Heart left ventricle (tissue), 16 donors: ENCODE measurements at regions of chr3 and their contacts with region 1.

Region 1: DNA sequence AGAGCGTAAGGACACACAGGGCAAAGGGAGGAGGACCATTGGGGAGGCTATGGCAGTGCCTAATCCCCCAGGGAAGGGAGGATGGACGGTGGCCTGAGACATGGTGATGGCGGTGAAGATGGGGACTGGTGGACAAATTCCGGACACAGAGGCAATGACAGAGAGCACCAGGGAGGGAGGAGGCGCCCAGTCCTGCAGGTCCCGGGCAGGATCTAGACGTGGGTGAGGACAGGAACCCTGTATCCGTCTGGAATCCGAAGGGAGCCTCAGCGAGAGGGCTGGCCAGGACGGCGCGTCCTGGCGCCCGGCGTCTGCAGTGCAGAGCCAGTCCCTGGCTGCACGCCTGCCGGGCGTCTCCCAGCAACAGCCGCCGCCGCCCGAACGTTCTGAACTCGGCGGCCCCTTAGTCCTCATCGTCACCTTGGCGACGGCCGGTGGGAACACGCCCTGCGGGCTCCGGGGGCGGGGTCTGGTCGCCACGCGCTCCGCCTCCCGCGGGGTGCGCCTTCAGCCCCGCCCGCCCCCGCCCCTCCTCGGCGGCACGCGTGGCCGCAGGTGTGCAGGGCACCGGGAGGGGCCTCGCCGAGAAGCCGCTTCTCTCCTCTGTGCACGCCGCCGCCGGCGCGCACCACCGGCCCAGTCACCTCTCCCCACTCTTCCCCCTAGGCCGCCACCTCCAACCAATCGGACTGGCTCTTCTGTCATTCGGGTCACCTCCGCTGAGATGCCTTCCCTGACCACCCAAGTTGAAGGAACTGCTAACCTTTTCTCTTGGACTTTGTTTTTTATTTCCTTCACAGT is 11.6 kb downstream of the XIRP1 start:
- DNase-seq: peak; percentile 93 to 96 (median 95)
- ATAC-seq: peak; percentile 80 to 89 (median 84)
- H3K4me3 ChIP-seq: peak overlapping the region in 11 of 12 donors; percentile 15 to 53 (median 47)
- H3K27ac ChIP-seq: peak overlapping the region; percentile 69 to 99 (median 94)
- H3K4me1 ChIP-seq: peaks cover 3 to 84% (median 44%) of the 10 kb centered on the region in 12 donors
- H3K27me3 ChIP-seq: no peaks in the 10 kb centered on the region
- CTCF ChIP-seq: peak in 9 of 12 donors; percentile 9 to 53 (median 32)
- POLR2A ChIP-seq: peak in 1 of 2 donors; percentile 50

Region 2: GRCh38 chr3:39135170-39135805 is 45.5 kb before region 1 on chr3:
- intact Hi-C with region 1: loop called in 7 of 10 experiments (anchors 1 to 10 kb)
- DNase-seq: peak in 4 of 5 donors; percentile 32 to 79 (median 74)
- ATAC-seq: peak; percentile 49 to 65 (median 58)
- H3K4me3 ChIP-seq: no peak overlapping the region
- H3K27ac ChIP-seq: peak overlapping the region in 6 of 12 donors; percentile 27 to 69 (median 48)
- H3K4me1 ChIP-seq: peaks cover 11 to 56% (median 23%) of the 10 kb centered on the region in 12 donors
- H3K27me3 ChIP-seq: no peaks in the 10 kb centered on the region
- CTCF ChIP-seq: no peak
- POLR2A ChIP-seq: peak in 1 of 2 donors; percentile 27

Region 3: DNA sequence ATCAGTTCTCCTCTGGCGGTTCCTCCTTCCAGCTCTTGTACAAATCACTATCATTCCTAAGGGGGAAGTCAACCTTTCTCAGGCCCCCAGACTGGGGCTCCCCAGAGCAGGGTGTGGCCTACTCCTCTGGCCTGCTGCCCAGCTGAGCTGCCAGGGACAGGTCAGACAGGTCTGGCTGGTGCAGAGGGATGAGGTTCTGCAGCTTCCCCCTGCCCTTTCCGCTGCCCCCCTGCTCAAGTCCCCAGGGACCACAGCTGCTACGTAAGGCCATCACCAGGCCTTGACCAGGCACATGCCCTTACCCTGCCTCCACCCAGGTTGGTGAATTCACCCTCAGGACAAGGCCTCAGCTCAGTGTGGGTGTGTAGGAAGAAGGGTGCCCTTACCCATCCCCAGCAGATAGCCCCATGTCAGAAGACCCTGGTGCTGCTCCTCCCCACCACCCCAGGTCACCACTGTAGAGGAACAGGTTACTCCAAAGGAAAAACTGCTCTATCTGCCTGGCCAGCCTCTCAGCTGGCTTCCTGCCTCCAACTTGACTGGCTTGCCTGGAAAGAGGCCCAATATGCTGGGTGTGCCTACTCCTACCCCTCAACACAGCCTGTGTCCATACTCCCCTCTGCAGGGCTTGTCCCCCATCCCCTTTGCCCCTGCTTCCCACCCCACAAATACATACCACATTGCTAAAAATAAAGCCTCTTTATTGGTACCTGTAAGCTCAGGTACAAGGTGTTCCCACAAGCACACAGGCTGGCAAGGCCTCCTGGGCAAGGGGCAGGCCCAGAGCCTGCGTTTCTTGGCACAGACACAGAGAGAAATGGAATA is 39.4 kb before region 1 on chr3:
- intact Hi-C with region 1: loop called in 6 of 10 experiments (anchors 5 to 10 kb)
- DNase-seq: peak in 4 of 5 donors; percentile 55 to 78 (median 74)
- ATAC-seq: peak; percentile 45 to 59 (median 52)
- H3K4me3 ChIP-seq: no peak overlapping the region
- H3K27ac ChIP-seq: peak overlapping the region; percentile 4 to 60 (median 38)
- H3K4me1 ChIP-seq: peaks cover 18 to 75% (median 45%) of the 10 kb centered on the region in 12 donors
- H3K27me3 ChIP-seq: no peaks in the 10 kb centered on the region
- CTCF ChIP-seq: no peak
- POLR2A ChIP-seq: no peak

Region 4: DNA sequence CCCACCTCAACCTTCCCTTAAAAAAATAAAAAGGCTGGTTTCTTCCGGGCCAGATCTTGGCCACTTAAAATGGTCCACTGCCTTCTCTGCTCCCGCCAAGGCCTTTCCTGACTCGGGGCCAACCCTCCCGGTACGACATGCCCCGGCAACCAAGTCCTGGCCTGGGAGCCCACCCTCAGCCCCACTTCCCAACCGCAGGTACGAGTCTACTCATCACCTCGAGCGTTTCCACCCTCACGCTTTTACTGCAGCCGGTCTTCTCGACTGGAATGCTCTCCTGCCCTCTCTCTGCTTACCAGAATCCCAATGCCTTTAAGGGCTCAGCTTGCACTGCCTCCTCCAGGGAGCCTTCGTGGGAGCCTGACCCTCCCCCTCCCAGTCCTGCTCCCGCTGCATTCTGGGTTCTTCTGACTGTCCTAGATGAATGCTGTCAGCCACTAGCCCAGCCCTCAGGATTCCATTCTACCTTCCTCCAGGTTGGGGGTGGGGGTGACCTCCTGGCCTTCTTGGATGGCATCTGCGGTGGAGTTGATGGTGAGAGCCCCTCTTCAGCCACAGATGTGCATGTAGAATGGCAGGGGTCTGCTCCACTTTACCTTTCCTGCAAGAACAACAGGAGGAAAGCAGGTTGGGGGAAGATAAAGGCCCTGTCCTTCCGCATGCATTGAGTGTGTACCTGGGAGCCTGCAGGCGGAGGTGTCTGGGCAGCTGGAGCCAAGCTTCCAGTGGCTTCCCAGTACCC is 26.3 kb before region 1 on chr3:
- intact Hi-C with region 1: loop called in 1 of 10 experiments (anchors 2 kb)
- DNase-seq: peak in 1 of 5 donors; percentile 34
- ATAC-seq: no peak
- H3K4me3 ChIP-seq: peak overlapping the region in 5 of 12 donors; percentile 83 to 99 (median 96)
- H3K27ac ChIP-seq: peak overlapping the region; percentile 53 to 100 (median 99)
- H3K4me1 ChIP-seq: peaks cover 15 to 42% (median 32%) of the 10 kb centered on the region in 12 donors
- H3K27me3 ChIP-seq: no peaks in the 10 kb centered on the region
- CTCF ChIP-seq: no peak
- POLR2A ChIP-seq: no peak

Region 5: DNA sequence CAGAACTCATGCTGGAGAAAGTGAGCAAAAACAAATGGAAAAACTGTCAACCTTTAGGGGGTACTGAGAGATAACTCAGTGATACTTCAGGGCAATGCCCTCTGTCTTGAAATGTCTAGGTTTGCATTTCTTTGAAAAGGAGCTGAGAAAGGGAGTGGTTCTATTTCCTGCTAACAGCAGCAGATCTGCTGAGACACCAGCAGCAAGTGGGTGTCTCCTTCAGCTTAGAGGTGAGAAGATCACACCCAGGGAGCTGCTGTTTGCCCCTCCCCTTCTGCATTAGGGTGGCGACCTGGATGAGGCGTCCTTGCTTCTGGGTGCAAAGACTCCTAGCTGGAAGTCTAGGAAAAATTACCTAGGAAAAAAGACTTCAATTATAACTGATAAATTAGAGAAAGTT is 54.0 kb after region 1 on chr3:
- intact Hi-C with region 1: no loop called
- DNase-seq: no peak
- ATAC-seq: no peak
- H3K4me3 ChIP-seq: no peak overlapping the region
- H3K27ac ChIP-seq: peak overlapping the region in 1 of 12 donors; percentile 12
- H3K4me1 ChIP-seq: peaks cover 0 to 34% (median 3%) of the 10 kb centered on the region in 12 donors
- H3K27me3 ChIP-seq: peaks cover 0 to 2% (median 0%) of the 10 kb centered on the region in 9 donors
- CTCF ChIP-seq: no peak
- POLR2A ChIP-seq: no peak

Region 6: DNA sequence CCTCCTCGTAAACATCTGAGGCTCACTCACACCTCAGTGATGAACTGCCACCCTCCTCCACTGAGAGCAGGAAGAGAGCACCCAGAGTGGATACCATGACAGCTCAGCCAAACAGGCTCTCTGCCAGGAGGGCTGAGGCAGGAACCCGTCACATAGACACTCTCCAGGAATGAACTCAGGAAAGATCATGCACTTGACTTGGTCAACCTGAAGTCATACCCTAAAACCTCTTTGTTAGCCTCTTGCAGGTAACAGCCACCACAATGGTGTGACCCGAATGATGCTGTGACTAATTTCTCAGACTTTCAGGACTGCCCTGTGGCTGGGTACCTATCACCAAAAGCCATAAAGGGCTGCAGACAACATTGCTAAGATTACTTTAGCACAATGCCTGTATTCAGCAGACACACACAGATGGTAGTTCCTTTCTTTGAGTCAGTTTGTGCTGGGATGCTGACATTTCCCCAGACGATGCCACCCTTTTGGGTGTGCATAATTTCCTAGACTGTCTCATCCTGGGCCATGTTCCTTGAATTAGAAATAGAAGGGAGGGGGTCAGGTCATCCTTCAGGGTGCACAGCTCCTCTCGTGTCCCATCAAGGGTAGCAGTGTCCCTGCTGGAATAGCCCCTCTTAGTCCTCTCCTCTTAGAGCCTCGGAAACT is 68.8 kb after region 1 on chr3:
- intact Hi-C with region 1: no loop called
- DNase-seq: peak in 1 of 5 donors; percentile 49
- ATAC-seq: peak in 3 of 4 donors; percentile 49 to 79 (median 76)
- H3K4me3 ChIP-seq: no peak overlapping the region
- H3K27ac ChIP-seq: peak overlapping the region in 4 of 12 donors; percentile 22 to 82 (median 46)
- H3K4me1 ChIP-seq: peaks cover 0 to 37% (median 9%) of the 10 kb centered on the region in 12 donors
- H3K27me3 ChIP-seq: no peaks in the 10 kb centered on the region
- CTCF ChIP-seq: no peak
- POLR2A ChIP-seq: no peak

Region 7: DNA sequence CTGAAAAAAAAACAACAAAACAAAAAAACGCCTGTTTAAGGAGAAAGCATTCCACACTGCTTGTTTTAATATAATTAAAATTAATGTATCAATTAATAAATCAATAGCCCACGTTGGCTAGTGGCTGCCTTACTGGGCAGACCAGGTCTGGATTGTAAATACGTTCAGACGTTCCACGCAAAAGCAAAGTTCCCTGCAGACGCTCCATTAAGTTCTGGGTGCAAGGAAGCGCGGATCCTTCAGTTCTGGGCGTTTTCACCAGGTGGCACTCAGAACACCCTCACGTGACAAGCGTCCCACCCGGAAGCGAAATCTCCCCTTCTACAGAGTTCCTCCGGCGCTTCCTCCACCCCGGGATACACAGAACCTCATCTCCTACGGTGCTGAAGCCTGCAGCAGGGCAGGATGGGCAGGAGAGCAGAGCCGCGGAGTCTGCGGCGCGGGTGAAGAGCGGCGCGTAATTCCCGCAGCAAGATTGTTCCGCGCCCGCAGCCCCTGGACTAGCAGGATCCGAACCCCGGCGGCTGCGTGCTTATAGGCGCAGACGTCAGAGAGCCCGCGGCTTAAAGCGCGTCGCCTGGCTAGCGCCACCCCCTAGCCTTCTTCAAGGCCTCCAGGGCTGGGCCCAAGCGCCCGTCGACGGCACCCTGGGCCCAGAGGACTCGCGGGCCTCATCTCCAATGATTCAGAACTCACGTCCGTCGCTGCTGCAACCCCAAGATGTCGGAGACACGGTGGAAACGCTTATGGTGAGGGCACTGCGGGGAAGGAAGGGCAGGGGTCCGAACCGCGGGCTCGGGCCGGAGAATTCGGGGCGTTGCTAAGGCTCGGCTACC is 202.5 kb after region 1 on chr3 and contains the start of gene SLC25A38:
- intact Hi-C with region 1: loop called in 1 of 10 experiments (anchors 10 kb)
- DNase-seq: peak; percentile 69 to 85 (median 80)
- ATAC-seq: peak; percentile 62 to 83 (median 79)
- H3K4me3 ChIP-seq: peak within 1 kb of the TSS; percentile 67 to 96 (median 80)
- H3K27ac ChIP-seq: peak within 1 kb of the TSS; percentile 51 to 97 (median 90)
- H3K4me1 ChIP-seq: peaks cover 0 to 43% (median 21%) of the 10 kb centered on the region in 12 donors
- H3K27me3 ChIP-seq: no peaks in the 10 kb centered on the region
- CTCF ChIP-seq: peak in 7 of 12 donors; percentile 8 to 53 (median 26)
- POLR2A ChIP-seq: no peak
- total RNA-seq, gene SLC25A38: 13.6 to 30.6 (median 20.9) TPM